ENCODE measurements at regions of chr1 and their contacts with region 1.

Region 1: DNA sequence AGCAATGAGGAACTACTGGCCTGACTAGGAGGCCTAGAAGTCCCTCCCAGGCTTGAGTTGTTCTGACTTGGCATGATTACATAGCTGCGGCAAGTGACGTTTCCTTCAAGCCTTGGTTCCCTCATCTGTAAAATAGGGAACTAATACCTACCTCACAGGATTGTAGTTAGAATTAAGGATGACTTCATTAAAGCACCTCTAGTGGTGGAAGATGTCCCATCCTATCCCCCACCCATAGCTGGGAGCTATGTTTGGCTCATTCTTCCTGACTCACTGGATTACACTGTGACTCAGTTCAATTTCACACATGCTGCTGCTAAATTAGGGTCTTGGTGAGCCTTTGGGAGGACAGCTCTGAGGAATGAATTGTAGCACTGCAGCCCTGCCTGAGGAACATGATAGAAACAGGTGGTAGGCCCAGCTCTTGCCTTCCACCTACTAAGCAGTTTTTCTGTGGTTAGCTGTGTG is 6.0 kb upstream of the SHISA4 start:
- DNase-seq: no peak
- H3K4me3 ChIP-seq: no peak overlapping the region
- H3K27ac ChIP-seq: peak overlapping the region in 5 of 8 donors; percentile 14 to 78 (median 66)
- H3K4me1 ChIP-seq: peaks cover 0 to 41% (median 14%) of the 10 kb centered on the region in 6 donors
- H3K27me3 ChIP-seq: peaks cover 0 to 13% (median 0%) of the 10 kb centered on the region in 7 donors
- CTCF ChIP-seq: peak in 1 of 11 experiments; percentile 17
- POLR2A ChIP-seq: no peak

Region 2: DNA sequence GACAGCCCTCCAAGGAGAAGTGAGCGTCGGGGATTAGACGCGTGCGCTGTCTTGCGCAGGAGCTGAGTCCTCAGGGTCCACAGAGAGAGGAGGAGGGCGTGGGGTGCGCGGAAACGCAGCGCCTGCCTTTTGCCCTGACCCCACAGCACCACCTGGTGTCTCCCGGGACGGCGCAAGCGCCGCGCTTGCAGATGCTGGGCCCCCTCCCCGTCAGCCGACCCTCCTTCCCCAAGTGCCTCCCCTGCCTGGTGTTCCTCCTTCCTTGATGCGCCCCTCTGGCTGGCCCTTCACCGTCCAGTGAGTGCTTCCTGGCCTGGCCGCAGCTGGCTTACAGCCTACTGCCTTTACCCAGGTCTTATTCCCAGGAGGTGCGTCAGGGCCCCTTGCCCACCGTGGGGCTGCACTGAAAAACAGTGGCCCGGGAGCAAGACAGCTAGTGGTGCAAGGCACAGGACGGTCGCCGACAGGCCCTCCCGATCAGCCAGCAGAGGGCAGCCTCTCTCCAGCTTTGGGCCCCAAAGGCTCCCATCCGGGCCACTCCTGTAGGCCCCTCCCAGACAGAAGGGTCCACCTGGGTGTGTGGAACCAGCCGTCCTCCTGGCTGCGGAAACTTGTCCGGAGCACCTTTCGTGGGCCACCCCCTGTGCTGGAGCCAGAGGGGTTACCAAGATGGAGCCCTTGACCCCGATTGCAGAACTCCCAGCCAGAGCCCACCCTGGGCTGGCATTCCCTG is 400.8 kb before region 1 on chr1:
- intact Hi-C with region 1: no loop called
- DNase-seq: peak; percentile 95
- H3K4me3 ChIP-seq: peak overlapping the region in 7 of 8 donors; percentile 34 to 73 (median 41)
- H3K27ac ChIP-seq: peak overlapping the region in 3 of 8 donors; percentile 30 to 70 (median 66)
- H3K4me1 ChIP-seq: peaks cover 17 to 52% (median 45%) of the 10 kb centered on the region in 6 donors
- H3K27me3 ChIP-seq: peaks cover 0 to 20% (median 10%) of the 10 kb centered on the region in 7 donors
- CTCF ChIP-seq: peak; percentile 77 to 94 (median 91)
- POLR2A ChIP-seq: no peak

Region 3: GRCh38 chr1:201970334-201971159 is 87.8 kb after region 1 on chr1:
- intact Hi-C with region 1: loop called (anchors 5 kb)
- DNase-seq: no peak
- H3K4me3 ChIP-seq: no peak overlapping the region
- H3K27ac ChIP-seq: no peak overlapping the region
- H3K4me1 ChIP-seq: peaks cover 0 to 6% (median 0%) of the 10 kb centered on the region in 6 donors
- H3K27me3 ChIP-seq: no peaks in the 10 kb centered on the region
- CTCF ChIP-seq: no peak
- POLR2A ChIP-seq: no peak